Gastrocnemius medialis (tissue), 4 donors: ENCODE measurements at regions of chr9 and their contacts with region 1.

Region 1: GRCh38 chr9:15142878-15143534 is 164.0 kb downstream of the TTC39B start:
- DNase-seq: no peak
- ATAC-seq: peak in 1 of 2 donors; percentile 68
- H3K4me3 ChIP-seq: no peak overlapping the region
- H3K27ac ChIP-seq: no peak overlapping the region
- H3K4me1 ChIP-seq: peaks cover 5 to 9% of the 10 kb centered on the region in 2 donors
- H3K27me3 ChIP-seq: no peaks in the 10 kb centered on the region
- CTCF ChIP-seq: peak; percentile 36 to 77 (median 51)
- POLR2A ChIP-seq: no peak

Region 2: GRCh38 chr9:15104826-15105420 is 38.1 kb before region 1 on chr9:
- in situ Hi-C with region 1: loop called in 3 of 4 experiments (anchors 5 kb)
- intact Hi-C with region 1: loop called (anchors 2 kb)
- DNase-seq: peak in 1 of 2 donors; percentile 8
- ATAC-seq: peak; percentile 73 to 84
- H3K4me3 ChIP-seq: no peak overlapping the region
- H3K27ac ChIP-seq: no peak overlapping the region
- H3K4me1 ChIP-seq: no peaks in the 10 kb centered on the region
- H3K27me3 ChIP-seq: no peaks in the 10 kb centered on the region
- CTCF ChIP-seq: peak; percentile 57 to 77 (median 75)
- POLR2A ChIP-seq: no peak

Region 3: GRCh38 chr9:15154677-15155076 is 11.7 kb after region 1 on chr9:
- in situ Hi-C with region 1: no loop called
- intact Hi-C with region 1: loop called (anchors 1 kb)
- DNase-seq: no peak
- ATAC-seq: no peak
- H3K4me3 ChIP-seq: no peak overlapping the region
- H3K27ac ChIP-seq: peak overlapping the region in 1 of 4 donors; percentile 56
- H3K4me1 ChIP-seq: no peaks in the 10 kb centered on the region
- H3K27me3 ChIP-seq: no peaks in the 10 kb centered on the region
- CTCF ChIP-seq: no peak
- POLR2A ChIP-seq: no peak

Region 4: DNA sequence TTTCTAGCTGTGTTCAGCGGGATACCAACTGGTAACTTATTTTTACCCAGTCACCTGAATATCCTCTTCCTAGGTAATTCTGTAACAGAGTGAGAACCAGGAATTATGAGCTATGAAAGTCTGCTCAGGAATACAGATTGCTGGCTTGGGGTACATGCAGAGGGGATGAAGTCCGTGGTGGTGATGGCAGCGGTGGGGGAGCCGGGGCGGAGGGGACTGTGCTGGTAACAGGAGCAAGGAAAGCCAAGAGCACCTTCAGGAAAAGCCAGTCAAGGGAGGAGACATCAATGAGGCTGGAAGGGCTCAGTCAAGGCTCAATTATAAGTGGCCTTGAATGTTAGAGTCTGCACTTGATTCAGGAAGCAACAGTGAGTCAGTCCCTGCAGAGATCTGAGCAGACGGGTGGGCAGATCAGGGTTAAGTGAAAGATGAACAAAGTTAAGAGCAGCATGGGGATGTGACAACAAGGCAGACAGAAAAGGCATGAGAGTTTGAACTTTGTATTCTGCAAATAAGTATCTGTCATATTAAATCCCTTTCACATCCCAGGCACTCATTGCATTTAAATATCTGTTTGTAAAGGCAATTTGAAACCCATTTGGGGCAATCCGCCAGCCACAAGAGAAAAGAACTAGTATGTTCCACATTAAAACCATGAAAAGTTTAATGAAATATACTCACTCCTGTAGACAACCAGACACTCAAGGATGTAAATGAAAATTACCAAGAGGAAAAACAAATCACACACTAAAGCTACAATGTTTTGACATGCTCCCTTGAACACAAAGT is 62.8 kb after region 1 on chr9:
- in situ Hi-C with region 1: no loop called
- intact Hi-C with region 1: loop called (anchors 10 kb)
- DNase-seq: no peak
- ATAC-seq: no peak
- H3K4me3 ChIP-seq: no peak overlapping the region
- H3K27ac ChIP-seq: no peak overlapping the region
- H3K4me1 ChIP-seq: no peaks in the 10 kb centered on the region
- H3K27me3 ChIP-seq: no peaks in the 10 kb centered on the region
- CTCF ChIP-seq: no peak
- POLR2A ChIP-seq: no peak